Breast epithelium (tissue), 4 donors: ENCODE measurements at regions of chr10 and their contacts with region 1.

Region 1: GRCh38 chr10:127383526-127383925 is 165.6 kb upstream of the NPS start:
- DNase-seq: peak in 1 of 2 donors; percentile 37
- H3K4me3 ChIP-seq: no peak overlapping the region
- H3K27ac ChIP-seq: no peak overlapping the region
- H3K4me1 ChIP-seq: no peaks in the 10 kb centered on the region
- H3K27me3 ChIP-seq: no peaks in the 10 kb centered on the region
- CTCF ChIP-seq: no peak
- POLR2A ChIP-seq: no peak

Region 2: GRCh38 chr10:127745861-127746260 is 362.3 kb after region 1 on chr10:
- intact Hi-C with region 1: loop called (anchors 5 kb)
- DNase-seq: no peak
- H3K4me3 ChIP-seq: no peak overlapping the region
- H3K27ac ChIP-seq: no peak overlapping the region
- H3K4me1 ChIP-seq: no peaks in the 10 kb centered on the region
- H3K27me3 ChIP-seq: no peaks in the 10 kb centered on the region
- CTCF ChIP-seq: no peak
- POLR2A ChIP-seq: no peak